ENCODE measurements at regions of chr3 and their contacts with region 1.

Region 1: DNA sequence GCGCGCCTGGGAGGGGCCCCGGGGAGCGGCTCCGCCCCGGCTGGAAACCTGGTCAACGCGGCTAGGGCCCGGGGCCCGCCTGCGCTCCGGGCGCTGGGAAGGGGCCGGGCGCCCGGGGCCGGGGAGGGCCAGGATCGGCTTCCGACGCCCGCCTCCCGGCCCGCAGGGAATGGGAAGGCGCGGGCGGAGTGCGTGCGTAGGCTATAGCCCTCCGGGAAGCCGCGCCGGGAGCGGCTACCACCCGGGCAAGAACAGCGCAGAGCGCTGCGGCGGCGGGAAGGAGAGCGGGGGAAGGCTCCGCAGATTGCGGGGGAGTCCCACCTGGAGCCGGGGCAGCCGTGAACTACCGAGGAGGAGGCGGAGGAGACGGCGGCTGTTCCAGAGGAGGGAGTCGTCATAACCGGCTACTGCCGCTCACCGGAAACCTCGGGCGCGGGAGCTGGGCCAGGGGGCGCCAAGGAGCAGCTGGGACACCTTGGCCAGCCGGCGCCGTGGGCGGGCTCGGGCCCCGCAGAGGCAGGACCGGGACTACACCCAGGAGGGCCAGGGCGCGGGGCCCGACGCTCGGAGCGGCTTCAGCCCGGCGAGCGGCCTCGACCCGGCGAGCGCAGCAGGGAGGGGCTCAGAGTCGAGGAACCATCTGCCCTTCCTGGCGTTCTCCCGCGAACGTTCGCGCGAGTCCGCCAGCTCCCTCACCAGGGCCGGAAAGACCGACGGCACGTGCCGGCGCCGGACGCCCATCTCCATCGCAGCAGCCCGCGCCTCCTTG is at the start of gene EOGT:
- DNase-seq: peak; percentile 61
- ATAC-seq: peak; percentile 90
- H3K4me3 ChIP-seq: peak within 1 kb of the TSS; percentile 62 to 69
- H3K27ac ChIP-seq: peak within 1 kb of the TSS; percentile 90
- H3K4me1 ChIP-seq: peaks cover 4 to 18% of the 10 kb centered on the region in 2 experiments
- H3K27me3 ChIP-seq: no peaks in the 10 kb centered on the region
- CTCF ChIP-seq: peak; percentile 33 to 71 (median 54); a peak in 5 of 6 replicates
- POLR2A ChIP-seq: peak; percentile 36
- RAD21 ChIP-seq: 0 out of 2 replicates have a peak, but pooled peaks have one; percentile 21
- total RNA-seq, gene EOGT: 20.1 TPM

Region 2: DNA sequence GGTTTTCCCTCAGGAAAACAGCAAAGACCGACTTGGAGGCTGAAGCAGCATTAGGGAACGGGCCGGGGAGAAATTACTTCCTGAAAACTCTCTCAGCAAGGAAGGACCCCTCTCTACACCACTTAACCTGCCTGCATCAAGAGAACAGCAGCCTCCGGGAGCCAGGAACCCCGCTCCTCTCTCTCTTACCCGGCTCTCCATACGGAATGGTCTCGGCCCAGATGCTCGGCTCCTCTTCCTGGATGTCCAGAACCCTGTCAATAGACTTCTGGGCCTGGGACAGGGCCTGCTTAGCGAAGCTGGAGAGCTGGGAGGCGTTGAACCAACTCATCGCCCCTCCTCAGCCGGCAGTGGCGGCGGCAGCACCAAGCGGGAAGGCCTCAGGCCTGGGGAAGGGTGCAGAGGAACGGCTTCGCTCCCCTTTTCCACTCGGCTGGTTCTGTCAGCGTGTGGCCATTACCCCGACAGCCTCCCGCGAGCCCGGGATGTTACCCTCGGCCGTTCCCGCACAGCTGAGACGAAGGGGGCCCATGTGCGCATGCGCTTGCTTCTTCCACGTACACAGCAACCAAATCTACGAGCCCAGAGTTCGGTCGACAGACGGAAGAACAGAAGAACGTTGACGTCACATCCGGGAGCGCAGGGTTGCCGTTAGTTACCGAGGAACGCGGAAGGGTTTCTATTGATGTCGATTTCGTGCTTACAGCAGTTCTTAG is 38.5 kb after region 1 on chr3 and contains the start of gene TMF1:
- CTCF ChIA-PET with region 1: no interaction called
- POLR2A ChIA-PET with region 1: no interaction called
- RAD21 ChIA-PET with region 1: no interaction called
- intact Hi-C with region 1: loop called (anchors 5 kb)
- DNase-seq: peak; percentile 98
- ATAC-seq: peak; percentile 90
- H3K4me3 ChIP-seq: peak within 1 kb of the TSS; percentile 81 to 87
- H3K27ac ChIP-seq: peak within 1 kb of the TSS; percentile 61
- H3K4me1 ChIP-seq: peaks cover 10 to 14% of the 10 kb centered on the region in 2 experiments
- H3K27me3 ChIP-seq: no peaks in the 10 kb centered on the region
- CTCF ChIP-seq: no peak
- POLR2A ChIP-seq: no peak
- RAD21 ChIP-seq: no peak
- total RNA-seq, gene TMF1: 27.3 TPM